Right ventricle myocardium inferior (tissue), 1 donor: ENCODE measurements at regions of chr18 and their contacts with region 1.

Region 1: GRCh38 chr18:75209129-75209950 is at the start of gene PTGR3:
- DNase-seq: peak; percentile 90
- ATAC-seq: peak; percentile 79
- total RNA-seq, gene PTGR3: 71.5 TPM

Region 2: GRCh38 chr18:74597662-74598349 is 611.5 kb before region 1 on chr18 and contains the start of gene ZNF407:
- intact Hi-C with region 1: loop called (anchors 5 kb)
- DNase-seq: peak; percentile 92
- ATAC-seq: peak; percentile 94
- total RNA-seq, gene ZNF407: 10.7 TPM

Region 3: GRCh38 chr18:74862094-74862493 is 347.2 kb before region 1 on chr18:
- intact Hi-C with region 1: loop called (anchors 2 kb)
- DNase-seq: no peak
- ATAC-seq: peak; percentile 95

Region 4: GRCh38 chr18:75041586-75041985 is 167.8 kb before region 1 on chr18:
- intact Hi-C with region 1: loop called (anchors 5 kb)
- DNase-seq: no peak
- ATAC-seq: no peak

Region 5: DNA sequence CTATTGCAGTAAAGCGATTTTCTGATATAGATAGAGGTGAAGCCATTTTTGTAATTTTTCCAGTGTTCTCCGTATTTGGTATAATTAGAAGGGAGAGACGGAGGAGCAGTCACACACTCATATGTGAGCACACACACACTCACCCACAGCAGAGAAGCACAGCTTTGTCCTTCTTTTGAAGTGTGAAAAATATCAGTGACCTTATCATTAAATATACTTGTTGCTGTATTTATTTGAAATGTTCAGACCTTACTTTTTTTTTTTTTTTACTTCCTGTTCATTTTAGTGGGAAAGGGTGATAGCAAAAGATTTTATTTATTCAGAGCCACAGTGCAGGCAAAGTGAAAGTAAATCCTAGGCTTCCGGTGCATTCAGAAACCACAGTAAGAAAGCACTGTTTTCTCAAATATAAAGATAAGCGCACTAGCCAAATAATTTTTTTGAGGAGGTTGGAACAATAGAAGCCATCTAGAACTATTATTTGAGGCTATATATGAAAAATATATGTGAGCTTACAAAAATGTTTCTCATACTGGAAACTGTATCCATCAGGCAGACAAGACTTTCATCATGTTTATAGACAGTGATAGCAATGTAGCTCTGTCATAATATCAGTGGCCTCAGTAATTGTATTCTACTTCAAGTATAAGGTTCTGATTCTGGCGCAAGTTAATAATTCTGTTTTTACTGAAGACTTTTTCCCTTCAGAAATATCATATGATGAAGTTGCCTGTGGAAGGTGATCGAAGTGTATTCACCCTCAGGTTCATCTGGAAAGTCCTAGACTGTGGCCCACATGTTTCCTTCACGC is 38.5 kb after region 1 on chr18:
- intact Hi-C with region 1: loop called (anchors 2 kb)
- DNase-seq: no peak
- ATAC-seq: peak; percentile 51

Region 6: DNA sequence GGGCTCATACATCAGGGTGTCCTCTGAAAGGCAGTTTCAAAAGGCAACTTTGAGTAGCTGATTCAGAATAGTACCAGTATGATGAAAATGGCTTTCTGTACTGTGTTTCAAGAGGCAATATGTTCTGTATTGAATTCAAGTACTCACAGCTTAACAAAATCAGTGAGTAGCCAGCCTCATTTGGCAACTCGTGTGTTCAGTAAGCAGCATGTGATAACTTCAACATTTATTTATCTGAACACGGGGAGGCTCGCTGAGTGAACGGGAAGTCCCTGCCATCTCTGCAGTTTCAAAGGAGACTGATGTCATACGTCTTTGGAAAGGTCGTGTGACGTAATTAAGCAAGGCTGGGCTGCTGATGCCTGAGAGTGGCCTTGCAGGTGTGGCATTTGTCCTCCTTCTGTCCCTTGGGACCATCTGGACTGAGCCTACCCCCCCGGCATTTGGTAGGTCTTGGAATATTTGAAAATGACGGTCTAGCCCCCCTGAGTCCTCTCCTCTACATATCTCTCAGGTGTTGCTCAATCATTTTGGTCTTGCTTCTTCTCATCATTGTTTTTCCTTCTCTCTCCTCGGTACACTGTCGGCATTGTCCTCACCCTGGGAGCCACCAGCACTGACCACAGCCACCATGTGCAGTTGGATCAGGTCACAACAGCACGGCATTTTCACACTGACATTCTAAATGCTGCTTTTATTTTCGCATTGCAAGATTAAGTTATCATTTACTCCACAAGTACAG is 155.3 kb after region 1 on chr18:
- intact Hi-C with region 1: no loop called
- DNase-seq: no peak
- ATAC-seq: no peak